HCT116 (cell line): ENCODE measurements at regions of chr22 and their contacts with region 1.

Region 1: GRCh38 chr22:31970490-31971444 is 26.4 kb downstream of the YWHAH start:
- DNase-seq: peak; percentile 63
- ATAC-seq: peak; percentile 93
- H3K4me3 ChIP-seq: peak overlapping the region; percentile 51 to 60
- H3K27ac ChIP-seq: no peak overlapping the region; the same call in 1 of the 2 replicates
- H3K4me1 ChIP-seq: peaks cover 2 to 16% of the 10 kb centered on the region in 2 experiments; a peak in 3 of 4 replicates
- H3K27me3 ChIP-seq: no peaks in the 10 kb centered on the region
- CTCF ChIP-seq: peak; percentile 82 to 97 (median 83)
- POLR2A ChIP-seq: no peak
- RAD21 ChIP-seq: peak; percentile 86

Region 2: GRCh38 chr22:31399211-31400028 is 571.3 kb before region 1 on chr22 and contains the start of gene DRG1:
- CTCF ChIA-PET with region 1: no interaction called
- POLR2A ChIA-PET with region 1: no interaction called
- RAD21 ChIA-PET with region 1: no interaction called
- intact Hi-C with region 1: no loop called
- DNase-seq: peak; percentile 89
- ATAC-seq: peak; percentile 100
- H3K4me3 ChIP-seq: peak within 1 kb of the TSS; percentile 95 to 97
- H3K27ac ChIP-seq: peak within 1 kb of the TSS; percentile 66
- H3K4me1 ChIP-seq: peaks cover 7 to 14% of the 10 kb centered on the region in 2 experiments
- H3K27me3 ChIP-seq: no peaks in the 10 kb centered on the region
- CTCF ChIP-seq: no peak
- POLR2A ChIP-seq: peak; percentile 95
- RAD21 ChIP-seq: no peak
- total RNA-seq, gene DRG1: 68.2 TPM

Region 3: GRCh38 chr22:31451709-31452571 is 518.8 kb before region 1 on chr22:
- CTCF ChIA-PET with region 1: interaction called, 42 read pairs
- POLR2A ChIA-PET with region 1: no interaction called
- RAD21 ChIA-PET with region 1: interaction called, 3 to 7 read pairs
- intact Hi-C with region 1: loop called (anchors 10 kb)
- DNase-seq: peak; percentile 21
- ATAC-seq: peak; percentile 95
- H3K4me3 ChIP-seq: no peak overlapping the region
- H3K27ac ChIP-seq: no peak overlapping the region
- H3K4me1 ChIP-seq: no peaks in the 10 kb centered on the region
- H3K27me3 ChIP-seq: no peaks in the 10 kb centered on the region
- CTCF ChIP-seq: peak; percentile 48 to 75 (median 72); a peak in 5 of 6 replicates
- POLR2A ChIP-seq: no peak
- RAD21 ChIP-seq: peak; percentile 43; the same call in 1 of the 2 replicates

Region 4: DNA sequence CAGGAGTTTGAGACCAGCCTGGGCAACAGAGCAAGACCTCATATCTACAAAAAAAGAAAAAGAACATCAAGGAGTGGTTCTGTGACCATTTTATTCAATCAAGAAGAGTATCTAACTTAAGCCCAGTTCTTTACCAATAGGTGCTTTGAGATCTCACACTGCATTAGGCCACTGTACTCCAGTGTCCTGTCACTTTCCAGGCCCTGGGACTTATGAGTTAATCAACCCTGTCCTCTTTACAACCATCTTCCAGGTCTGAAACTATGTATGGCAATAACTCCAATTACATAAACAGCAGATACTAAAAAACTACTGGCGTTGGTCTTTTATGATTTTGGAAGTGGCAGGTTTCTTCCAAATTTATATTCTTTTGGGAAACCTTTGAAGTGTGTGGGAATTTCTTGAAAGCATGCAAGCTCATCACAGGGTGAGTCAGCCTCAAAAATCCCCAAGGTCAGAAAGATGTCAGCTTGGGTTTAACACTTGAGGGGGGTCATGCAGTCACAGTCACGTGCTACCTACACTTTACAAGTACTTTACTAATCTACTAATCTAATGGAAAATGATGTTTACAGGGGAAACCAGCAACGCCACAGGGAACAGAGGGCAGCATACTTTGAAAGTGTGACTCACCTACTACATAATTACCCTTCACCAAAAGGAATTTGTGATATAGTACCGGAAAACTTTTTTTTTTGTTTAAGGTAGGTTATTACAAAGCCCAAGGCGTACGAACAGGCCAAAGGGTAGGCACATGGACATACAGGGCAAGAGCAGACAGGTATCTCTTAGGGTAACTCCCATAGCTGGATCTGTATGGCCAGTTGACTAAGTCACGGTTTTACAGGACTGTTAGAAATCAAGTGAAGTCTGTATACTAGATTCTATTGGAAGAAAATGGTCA is 324.3 kb before region 1 on chr22:
- CTCF ChIA-PET with region 1: interaction called, 10 read pairs
- POLR2A ChIA-PET with region 1: no interaction called
- RAD21 ChIA-PET with region 1: interaction called in 1 of 2 experiments, 4 read pairs
- intact Hi-C with region 1: no loop called
- DNase-seq: peak; percentile 91
- ATAC-seq: peak; percentile 92
- H3K4me3 ChIP-seq: peak overlapping the region in 1 of 2 experiments; percentile 12; a peak in 1 of 4 replicates
- H3K27ac ChIP-seq: peak overlapping the region; percentile 75
- H3K4me1 ChIP-seq: peaks cover 38 to 73% of the 10 kb centered on the region in 2 experiments
- H3K27me3 ChIP-seq: no peaks in the 10 kb centered on the region
- CTCF ChIP-seq: no peak
- POLR2A ChIP-seq: no peak
- RAD21 ChIP-seq: no peak

Region 5: DNA sequence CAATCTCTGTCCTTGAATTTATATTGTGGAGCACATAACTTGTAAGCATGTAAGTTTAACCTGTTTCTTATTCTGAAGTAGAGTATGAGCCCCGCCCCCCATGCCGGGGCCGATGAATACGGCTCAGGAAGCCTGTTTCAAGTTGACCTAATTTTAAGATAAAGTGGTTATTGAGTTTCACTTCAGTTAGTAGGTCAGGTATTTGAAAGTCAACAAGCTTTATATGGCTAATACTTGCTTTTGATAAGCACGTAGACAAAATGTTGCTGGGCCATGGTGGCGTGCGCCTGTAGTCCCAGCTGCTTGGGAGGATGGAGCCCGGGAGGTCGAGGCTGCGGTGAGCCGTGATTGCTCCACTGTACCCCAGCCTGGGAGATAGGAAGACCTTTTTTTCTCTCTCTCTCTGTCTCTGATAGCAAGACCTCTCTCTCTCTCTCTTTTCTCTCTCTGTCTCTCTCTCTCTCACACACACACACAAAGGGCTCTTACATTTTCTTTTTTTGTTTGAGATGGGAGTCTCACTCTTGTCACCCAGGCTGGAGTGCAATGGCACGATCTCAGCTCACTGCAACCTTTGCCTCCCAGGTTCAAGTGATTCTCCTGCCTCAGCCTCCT is 12.0 kb before region 1 on chr22:
- CTCF ChIA-PET with region 1: interaction called, 20 read pairs
- POLR2A ChIA-PET with region 1: no interaction called
- RAD21 ChIA-PET with region 1: interaction called in 1 of 2 experiments, 3 read pairs
- intact Hi-C with region 1: no loop called
- DNase-seq: no peak
- ATAC-seq: no peak
- H3K4me3 ChIP-seq: no peak overlapping the region
- H3K27ac ChIP-seq: no peak overlapping the region
- H3K4me1 ChIP-seq: no peaks in the 10 kb centered on the region
- H3K27me3 ChIP-seq: no peaks in the 10 kb centered on the region
- CTCF ChIP-seq: no peak
- POLR2A ChIP-seq: no peak
- RAD21 ChIP-seq: no peak

Region 6: GRCh38 chr22:32020117-32020516 is 49.4 kb after region 1 on chr22:
- CTCF ChIA-PET with region 1: no interaction called
- POLR2A ChIA-PET with region 1: no interaction called
- RAD21 ChIA-PET with region 1: no interaction called
- intact Hi-C with region 1: no loop called
- DNase-seq: peak; percentile 51
- ATAC-seq: peak; percentile 63; the same call in 1 of the 2 replicates
- H3K4me3 ChIP-seq: no peak overlapping the region
- H3K27ac ChIP-seq: no peak overlapping the region
- H3K4me1 ChIP-seq: peaks cover 0 to 31% of the 10 kb centered on the region in 2 experiments; a peak in 2 of 4 replicates
- H3K27me3 ChIP-seq: no peaks in the 10 kb centered on the region
- CTCF ChIP-seq: no peak
- POLR2A ChIP-seq: no peak
- RAD21 ChIP-seq: no peak

Region 7: DNA sequence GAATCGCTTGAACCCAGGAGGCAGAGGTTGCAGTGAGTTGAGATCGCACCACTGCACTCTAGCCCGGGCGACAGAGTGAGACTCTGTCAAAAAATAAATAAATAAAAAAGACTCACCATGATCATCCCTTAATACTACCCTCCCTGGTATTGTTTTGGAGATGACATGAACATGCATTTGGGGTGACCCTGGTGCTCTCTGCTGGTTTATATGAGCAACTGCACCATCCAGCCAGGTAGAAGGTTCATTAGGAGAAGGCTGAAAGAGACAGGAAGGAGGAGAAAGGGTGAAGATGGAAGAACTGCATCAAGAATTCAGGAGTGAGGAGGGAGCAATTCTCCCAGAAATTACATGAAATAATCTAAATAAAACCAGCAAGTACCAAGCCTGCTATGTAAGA is 110.1 kb after region 1 on chr22:
- CTCF ChIA-PET with region 1: interaction called, 38 read pairs
- POLR2A ChIA-PET with region 1: no interaction called
- RAD21 ChIA-PET with region 1: interaction called, 3 read pairs
- intact Hi-C with region 1: no loop called
- DNase-seq: peak; percentile 59
- ATAC-seq: peak; percentile 81
- H3K4me3 ChIP-seq: no peak overlapping the region
- H3K27ac ChIP-seq: no peak overlapping the region
- H3K4me1 ChIP-seq: peaks cover 18 to 24% of the 10 kb centered on the region in 2 experiments
- H3K27me3 ChIP-seq: no peaks in the 10 kb centered on the region
- CTCF ChIP-seq: peak; percentile 82 to 87 (median 83); a peak in 5 of 6 replicates
- POLR2A ChIP-seq: no peak
- RAD21 ChIP-seq: peak; percentile 93